Activated CD4-positive, alpha-beta memory T cell treated with anti-CD3 and anti-CD28 coated beads, Interleukin-2, amount 10 ng/mL, durations not matched to agents 7 days and 5 days (primary cell): ENCODE measurements at regions of chr3 and their contacts with region 1.

Region 1: GRCh38 chr3:4350789-4351163 is 47.6 kb downstream of the SETMAR start:
- DNase-seq: peak; percentile 54
- H3K4me3 Mint-ChIP-seq: peak overlapping the region; percentile 55
- H3K27ac Mint-ChIP-seq: peak overlapping the region; percentile 16
- H3K4me1 Mint-ChIP-seq: peaks cover 20% of the 10 kb centered on the region
- H3K27me3 Mint-ChIP-seq: no peaks in the 10 kb centered on the region

Region 2: GRCh38 chr3:4340411-4341335 is 10.1 kb before region 1 on chr3:
- CTCF ChIA-PET with region 1: interaction called, 17 read pairs
- POLR2A ChIA-PET with region 1: no interaction called
- DNase-seq: no peak
- H3K4me3 Mint-ChIP-seq: no peak overlapping the region
- H3K27ac Mint-ChIP-seq: no peak overlapping the region
- H3K4me1 Mint-ChIP-seq: peaks cover 5% of the 10 kb centered on the region
- H3K27me3 Mint-ChIP-seq: no peaks in the 10 kb centered on the region

Region 3: GRCh38 chr3:4394048-4394447 is 43.3 kb after region 1 on chr3:
- CTCF ChIA-PET with region 1: interaction called, 12 read pairs
- POLR2A ChIA-PET with region 1: no interaction called
- DNase-seq: peak; percentile 66
- H3K4me3 Mint-ChIP-seq: no peak overlapping the region
- H3K27ac Mint-ChIP-seq: peak overlapping the region; percentile 90
- H3K4me1 Mint-ChIP-seq: peaks cover 47% of the 10 kb centered on the region
- H3K27me3 Mint-ChIP-seq: no peaks in the 10 kb centered on the region

Region 4: GRCh38 chr3:4466741-4467521 is 116.2 kb after region 1 on chr3 and contains the start of gene SUMF1:
- CTCF ChIA-PET with region 1: interaction called, 9 read pairs
- POLR2A ChIA-PET with region 1: interaction called, 10 read pairs
- DNase-seq: peak; percentile 82
- H3K4me3 Mint-ChIP-seq: peak within 1 kb of the TSS; percentile 88
- H3K27ac Mint-ChIP-seq: peak within 1 kb of the TSS; percentile 86
- H3K4me1 Mint-ChIP-seq: peaks cover 22% of the 10 kb centered on the region
- H3K27me3 Mint-ChIP-seq: peaks cover under 1% of the 10 kb centered on the region
- total RNA-seq, gene SUMF1: 7.1 to 7.3 TPM

Region 5: GRCh38 chr3:4517643-4518311 is 167.0 kb after region 1 on chr3:
- CTCF ChIA-PET with region 1: interaction called, 17 read pairs
- POLR2A ChIA-PET with region 1: interaction called, 6 read pairs
- DNase-seq: no peak
- H3K4me3 Mint-ChIP-seq: no peak overlapping the region
- H3K27ac Mint-ChIP-seq: peak overlapping the region; percentile 13
- H3K4me1 Mint-ChIP-seq: peaks cover 31% of the 10 kb centered on the region
- H3K27me3 Mint-ChIP-seq: no peaks in the 10 kb centered on the region

Region 6: GRCh38 chr3:4584456-4585249 is 233.9 kb after region 1 on chr3:
- CTCF ChIA-PET with region 1: interaction called, 20 read pairs
- POLR2A ChIA-PET with region 1: no interaction called
- DNase-seq: peak; percentile 24
- H3K4me3 Mint-ChIP-seq: peak overlapping the region; percentile 74
- H3K27ac Mint-ChIP-seq: peak overlapping the region; percentile 31
- H3K4me1 Mint-ChIP-seq: peaks cover 39% of the 10 kb centered on the region
- H3K27me3 Mint-ChIP-seq: no peaks in the 10 kb centered on the region

Region 7: DNA sequence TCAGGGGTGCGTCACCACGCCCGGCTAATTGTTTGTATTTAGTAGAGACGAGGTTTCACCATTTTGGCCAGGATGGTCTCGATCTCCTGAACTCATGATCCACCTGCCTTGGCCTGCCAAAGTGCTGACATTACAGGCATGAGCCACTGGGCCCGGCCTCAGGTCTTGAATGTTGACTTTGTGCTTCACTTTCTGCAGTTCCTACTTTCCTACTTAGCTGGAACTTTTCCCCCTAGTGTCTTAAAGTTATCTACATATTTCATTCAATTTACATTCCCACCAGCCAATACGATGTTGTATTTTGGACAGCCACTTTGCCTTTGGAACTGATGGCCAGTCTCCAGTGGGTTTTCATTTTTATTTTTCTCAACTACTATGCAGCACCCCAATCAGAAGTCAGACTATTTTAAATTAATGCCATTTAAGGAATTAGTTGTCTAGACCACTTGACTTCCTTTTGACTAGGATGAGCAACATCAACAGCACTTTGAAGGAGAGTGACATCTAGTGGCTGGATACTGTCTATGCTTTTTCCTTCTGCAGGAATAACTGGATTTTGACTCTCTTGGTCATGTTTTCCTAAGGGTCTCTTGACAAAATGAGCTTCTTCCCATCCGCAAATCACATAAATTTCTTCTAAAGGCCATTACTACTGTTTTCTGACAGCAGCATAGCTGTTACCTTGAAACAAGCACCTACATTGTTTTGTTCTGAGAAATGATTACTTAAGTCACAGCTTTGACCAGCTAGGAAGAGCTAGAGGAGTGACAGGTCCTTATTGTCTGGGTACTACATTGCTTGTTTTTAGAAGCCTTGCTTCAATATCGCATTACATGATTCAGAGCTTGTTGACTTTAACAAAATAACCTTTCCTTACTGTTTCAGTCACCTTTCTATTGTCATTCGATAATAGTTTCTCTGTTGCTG is 282.6 kb after region 1 on chr3:
- CTCF ChIA-PET with region 1: interaction called, 91 read pairs
- POLR2A ChIA-PET with region 1: interaction called, 4 read pairs
- DNase-seq: no peak
- H3K4me3 Mint-ChIP-seq: no peak overlapping the region
- H3K27ac Mint-ChIP-seq: no peak overlapping the region
- H3K4me1 Mint-ChIP-seq: peaks cover 5% of the 10 kb centered on the region
- H3K27me3 Mint-ChIP-seq: no peaks in the 10 kb centered on the region